ENCODE measurements at regions of chr6 and their contacts with region 1.

Region 1: DNA sequence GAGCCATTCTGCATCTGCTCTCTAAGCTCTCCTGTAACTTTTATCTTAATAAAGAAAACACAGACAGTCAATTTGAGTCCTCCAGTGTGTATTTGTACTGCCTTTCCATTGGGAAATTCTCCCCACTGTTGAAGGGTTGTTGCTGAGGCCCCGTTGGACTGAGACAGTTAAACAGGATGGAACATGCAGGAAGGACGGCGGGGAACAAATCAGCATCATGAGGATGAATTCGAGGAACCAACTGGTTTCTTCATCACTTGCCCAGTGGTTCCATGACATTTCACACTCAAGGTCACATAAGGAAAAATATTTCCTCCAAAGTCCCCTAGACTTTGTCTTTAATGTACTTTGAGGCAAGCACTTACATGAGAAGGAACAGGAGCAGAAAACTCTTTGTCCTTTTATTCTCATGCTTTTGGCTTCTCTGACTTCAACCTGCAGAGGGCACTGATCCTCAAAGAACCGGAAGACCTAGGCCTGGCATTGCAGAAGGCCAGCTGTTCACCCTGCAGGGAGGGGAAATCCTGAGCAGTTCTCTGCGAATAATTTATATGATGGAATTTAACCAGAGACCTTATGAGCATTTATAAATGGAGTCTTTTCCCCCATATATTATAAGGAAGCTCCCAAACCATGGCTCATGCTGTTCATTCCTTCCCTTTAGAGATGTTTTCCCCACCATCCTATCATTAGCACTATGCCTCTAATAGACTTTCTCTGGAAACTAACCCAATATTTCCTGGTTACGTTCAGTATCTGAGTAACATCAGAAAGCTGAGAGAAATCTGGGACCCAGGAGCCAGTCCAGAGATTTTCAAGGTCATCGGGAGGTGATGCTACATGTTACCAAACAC is 55.2 kb upstream of the ADGRF1 start:
- DNase-seq: peak; percentile 34
- H3K4me3 Mint-ChIP-seq: no peak overlapping the region
- H3K27ac Mint-ChIP-seq: no peak overlapping the region
- H3K4me1 Mint-ChIP-seq: no peaks in the 10 kb centered on the region
- H3K27me3 Mint-ChIP-seq: peaks cover 3% of the 10 kb centered on the region

Region 2: DNA sequence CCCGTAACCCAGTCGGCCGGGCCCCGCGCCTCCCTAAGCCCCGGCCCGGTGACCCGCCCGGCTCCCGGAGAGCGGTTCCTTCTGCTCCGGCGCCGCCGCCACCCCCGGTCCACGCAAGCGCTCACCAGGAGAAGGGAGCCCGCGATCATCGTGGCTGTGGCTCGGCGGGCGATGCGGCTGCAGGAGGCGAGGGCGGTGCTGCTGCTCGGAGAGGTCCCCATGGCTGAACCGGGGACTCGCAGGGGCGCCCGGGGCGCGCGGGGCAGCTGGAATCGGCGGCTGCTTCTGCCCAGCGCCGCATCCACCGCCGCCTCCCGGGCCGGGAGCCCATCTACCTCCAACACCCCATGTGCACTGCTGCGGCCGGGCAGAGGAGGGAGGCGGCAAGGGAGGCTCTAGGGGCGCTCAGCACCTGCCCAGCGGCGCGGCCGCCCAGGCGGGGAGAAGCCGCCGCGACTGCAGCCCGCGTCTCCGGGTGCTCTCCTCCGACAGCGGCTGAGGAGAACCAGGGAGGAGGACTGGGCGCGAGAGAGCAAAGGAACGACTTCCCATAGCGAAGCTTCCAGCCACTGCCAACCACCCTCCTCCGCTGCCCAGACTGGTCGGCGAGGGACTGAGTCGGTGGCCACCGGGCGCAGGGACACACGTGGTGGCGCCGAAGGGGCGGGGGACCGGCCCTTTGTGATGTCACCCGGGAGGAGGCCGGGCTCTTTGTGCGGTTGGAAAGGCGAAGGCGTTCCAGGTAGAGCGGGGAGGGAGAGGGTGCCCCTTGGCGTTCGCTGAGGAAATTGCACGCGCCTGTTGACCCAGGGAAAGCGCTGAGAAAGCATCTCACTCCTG is 212.2 kb after region 1 on chr6 and contains the start of gene TNFRSF21:
- CTCF ChIA-PET with region 1: interaction called, 3 read pairs
- POLR2A ChIA-PET with region 1: no interaction called
- intact Hi-C with region 1: loop called (anchors 1 kb)
- DNase-seq: peak; percentile 89
- H3K4me3 Mint-ChIP-seq: peak within 1 kb of the TSS; percentile 62
- H3K27ac Mint-ChIP-seq: no peak within 1 kb of the TSS
- H3K4me1 Mint-ChIP-seq: peaks cover 8% of the 10 kb centered on the region
- H3K27me3 Mint-ChIP-seq: peaks cover 38% of the 10 kb centered on the region
- total RNA-seq, gene TNFRSF21: 0.97 to 1.2 TPM